GM12878 (cell line): ENCODE measurements at regions of chr10 and their contacts with region 1.

Region 1: GRCh38 chr10:131900350-131901146 is at the start of gene PPP2R2D:
- DNase-seq: peak; percentile 65
- ATAC-seq: peak; percentile 95
- H3K4me3 ChIP-seq: peak within 1 kb of the TSS; percentile 91
- H3K27ac ChIP-seq: peak within 1 kb of the TSS; percentile 73
- H3K4me1 ChIP-seq: peaks cover 22% of the 10 kb centered on the region
- H3K27me3 ChIP-seq: no peaks in the 10 kb centered on the region; a peak in 1 of 4 replicates
- CTCF ChIP-seq: no peak
- EP300 ChIP-seq: no peak
- POLR2A ChIP-seq: peak; percentile 11; the same call in 1 of the 2 replicates
- RAD21 ChIP-seq: no peak
- polyA plus RNA-seq, gene PPP2R2D: 2.8 to 3.6 TPM

Region 2: GRCh38 chr10:131885391-131886161 is 15.0 kb before region 1 on chr10:
- CTCF ChIA-PET with region 1: interaction called, 12 read pairs
- POLR2A ChIA-PET with region 1: no interaction called
- RAD21 ChIA-PET with region 1: no interaction called
- SMC1A ChIA-PET with region 1: interaction called, 3 read pairs
- in situ Hi-C with region 1: no loop called
- intact Hi-C with region 1: no loop called
- DNase-seq: no peak
- ATAC-seq: peak; percentile 100
- H3K4me3 ChIP-seq: no peak overlapping the region
- H3K27ac ChIP-seq: no peak overlapping the region
- H3K4me1 ChIP-seq: no peaks in the 10 kb centered on the region
- H3K27me3 ChIP-seq: no peaks in the 10 kb centered on the region
- CTCF ChIP-seq: peak; percentile 94 to 97 (median 94)
- EP300 ChIP-seq: no peak
- POLR2A ChIP-seq: no peak
- RAD21 ChIP-seq: peak; percentile 94

Region 3: DNA sequence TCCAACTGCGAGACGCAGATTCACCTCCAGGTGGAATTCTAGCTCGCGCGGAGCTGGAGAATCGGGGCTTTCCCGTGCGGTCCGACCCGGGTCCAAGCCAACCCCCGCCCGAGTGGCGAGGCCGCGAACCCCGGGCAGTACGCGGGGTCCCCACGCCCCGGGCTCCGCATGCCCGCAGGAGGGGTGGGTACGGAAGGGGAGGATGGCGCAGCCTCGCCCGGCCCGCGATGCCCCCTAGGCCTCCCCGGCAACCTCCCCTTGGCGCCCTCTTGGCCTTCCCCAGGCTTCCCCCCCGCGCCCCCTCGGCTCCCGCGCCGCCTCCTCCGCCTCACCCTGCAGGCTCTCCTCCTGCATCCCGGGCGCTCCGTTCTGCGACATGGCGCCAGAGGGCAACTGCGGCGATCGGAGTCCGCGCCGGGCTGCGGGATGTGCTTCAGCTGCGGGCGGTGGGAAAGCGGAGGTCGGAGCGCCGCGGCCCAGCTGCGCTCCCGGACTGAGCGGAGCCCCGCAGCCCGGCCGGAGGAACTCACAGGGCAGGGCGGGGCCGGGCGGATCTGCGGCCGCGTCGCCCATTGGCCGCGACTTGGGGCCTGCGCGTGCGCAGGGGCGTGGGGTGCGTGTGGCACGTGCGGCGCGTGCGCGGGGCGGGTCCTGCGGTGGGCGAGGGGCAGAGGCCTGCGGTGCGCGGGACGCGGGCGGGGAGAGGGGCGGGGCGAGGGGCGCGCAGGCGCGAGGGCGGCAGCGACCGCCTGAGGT is 81.1 kb after region 1 on chr10 and contains the start of gene BNIP3:
- CTCF ChIA-PET with region 1: interaction called, 3 read pairs
- POLR2A ChIA-PET with region 1: interaction called, 3 read pairs
- RAD21 ChIA-PET with region 1: no interaction called
- SMC1A ChIA-PET with region 1: interaction called, 4 read pairs
- in situ Hi-C with region 1: loop called (anchors 5 kb)
- intact Hi-C with region 1: loop called (anchors 2 kb)
- DNase-seq: peak; percentile 75
- ATAC-seq: peak; percentile 97
- H3K4me3 ChIP-seq: peak within 1 kb of the TSS; percentile 98
- H3K27ac ChIP-seq: peak within 1 kb of the TSS; percentile 55
- H3K4me1 ChIP-seq: no peaks in the 10 kb centered on the region; the same call in 1 of the 2 replicates
- H3K27me3 ChIP-seq: no peaks in the 10 kb centered on the region
- CTCF ChIP-seq: no peak
- EP300 ChIP-seq: no peak
- POLR2A ChIP-seq: peak; percentile 79
- RAD21 ChIP-seq: no peak
- polyA plus RNA-seq, gene BNIP3: 7.7 to 14.0 TPM

Region 4: DNA sequence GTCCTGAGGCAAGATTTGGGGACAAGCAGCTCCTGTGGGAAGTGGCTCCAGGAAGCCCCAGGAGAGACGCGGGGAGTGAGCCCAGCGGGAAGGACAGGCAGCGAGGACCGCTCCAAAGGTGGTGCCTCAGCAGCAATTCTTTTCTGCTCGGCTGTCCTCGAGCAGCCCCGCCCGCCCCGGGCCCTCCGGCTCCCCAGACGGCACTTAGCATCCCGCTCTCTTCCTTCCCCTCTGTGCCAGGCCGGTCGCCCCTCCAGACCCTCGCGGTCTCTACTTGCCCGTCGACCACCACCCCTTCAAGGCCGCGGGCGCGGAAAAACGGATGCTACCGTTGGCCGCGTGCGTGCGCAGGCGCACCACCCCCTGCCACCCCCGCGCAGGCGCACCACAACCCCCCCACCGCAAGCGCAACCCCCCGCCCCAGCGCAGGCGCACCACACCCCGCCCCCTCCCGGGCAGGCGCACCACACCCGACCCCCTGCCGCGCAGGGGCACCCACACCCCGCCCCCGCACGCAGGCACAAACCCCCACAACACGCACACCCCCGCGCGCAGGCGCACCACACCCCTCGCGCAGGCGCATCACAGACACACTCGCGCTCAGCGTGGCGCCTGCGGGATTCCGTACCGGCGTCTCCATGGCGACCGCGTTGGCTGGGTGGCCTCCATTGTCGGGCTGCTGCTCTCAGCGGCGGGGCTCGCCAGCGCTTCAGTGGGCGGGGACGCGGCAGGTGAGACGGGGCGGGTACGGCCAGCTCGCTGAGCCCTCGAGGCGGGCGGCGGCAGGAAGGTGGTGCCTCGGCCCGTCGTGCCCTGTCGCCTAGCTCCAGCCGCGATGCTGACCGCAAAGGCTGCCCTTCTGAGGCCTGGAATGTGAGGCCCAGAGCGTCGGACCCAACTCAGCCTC is 431.2 kb after region 1 on chr10 and contains the start of gene LRRC27:
- CTCF ChIA-PET with region 1: no interaction called
- POLR2A ChIA-PET with region 1: no interaction called
- RAD21 ChIA-PET with region 1: no interaction called
- SMC1A ChIA-PET with region 1: no interaction called
- in situ Hi-C with region 1: loop called (anchors 10 kb)
- intact Hi-C with region 1: loop called (anchors 5 kb)
- DNase-seq: peak; percentile 94
- ATAC-seq: peak; percentile 89
- H3K4me3 ChIP-seq: peak within 1 kb of the TSS; percentile 100
- H3K27ac ChIP-seq: peak within 1 kb of the TSS; percentile 91
- H3K4me1 ChIP-seq: peaks cover 12% of the 10 kb centered on the region
- H3K27me3 ChIP-seq: no peaks in the 10 kb centered on the region
- CTCF ChIP-seq: no peak
- EP300 ChIP-seq: no peak
- POLR2A ChIP-seq: peak; percentile 94
- RAD21 ChIP-seq: no peak
- polyA plus RNA-seq, gene LRRC27: 0.48 to 0.80 TPM

Region 5: DNA sequence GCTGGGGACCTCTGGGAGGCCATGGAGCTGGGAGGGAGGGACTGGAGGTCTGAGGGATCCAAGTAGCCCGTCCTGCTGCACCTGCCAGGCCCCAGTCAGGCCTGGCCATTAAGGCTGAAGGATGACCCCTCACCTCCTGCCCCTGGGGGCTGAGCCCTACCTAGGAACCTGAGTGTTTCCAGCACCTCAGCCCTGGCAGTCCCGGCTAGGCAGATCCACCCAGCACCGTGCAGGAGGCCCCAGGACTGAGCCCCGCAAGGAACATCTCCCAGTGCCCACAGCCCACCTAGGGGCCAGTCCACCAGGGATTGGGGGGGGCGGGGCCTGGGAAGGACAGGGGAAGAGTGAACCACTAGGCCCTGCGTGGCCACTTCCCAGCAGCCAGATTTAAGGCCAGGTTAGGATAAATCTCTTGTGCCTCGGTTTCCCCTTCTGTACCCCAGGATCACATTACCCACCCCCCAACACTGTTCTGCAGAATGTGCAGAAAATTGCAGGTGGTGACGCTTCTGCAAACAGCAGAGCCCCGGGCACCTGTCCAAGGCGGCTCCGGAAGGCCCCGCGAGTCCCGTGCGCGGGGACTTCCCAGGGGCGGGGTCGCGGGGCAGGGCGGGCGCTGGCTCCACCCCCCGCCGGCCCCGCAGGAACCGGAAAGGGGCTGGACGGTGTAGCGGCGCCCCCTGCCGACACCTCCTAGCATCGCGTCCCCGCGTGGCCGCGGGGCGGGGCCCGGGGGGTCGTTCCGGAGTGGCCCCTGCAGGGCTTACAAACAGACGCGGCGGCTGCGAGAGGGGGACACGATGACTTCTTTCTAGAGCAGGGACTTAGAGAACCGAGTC is 552.3 kb after region 1 on chr10:
- CTCF ChIA-PET with region 1: no interaction called
- POLR2A ChIA-PET with region 1: no interaction called
- RAD21 ChIA-PET with region 1: no interaction called
- SMC1A ChIA-PET with region 1: no interaction called
- in situ Hi-C with region 1: loop called (anchors 10 kb)
- intact Hi-C with region 1: no loop called
- DNase-seq: no peak
- ATAC-seq: peak; percentile 94
- H3K4me3 ChIP-seq: no peak overlapping the region
- H3K27ac ChIP-seq: peak overlapping the region; percentile 3; the same call in 1 of the 2 replicates
- H3K4me1 ChIP-seq: peaks cover 12% of the 10 kb centered on the region
- H3K27me3 ChIP-seq: no peaks in the 10 kb centered on the region
- CTCF ChIP-seq: peak; percentile 81 to 97 (median 88)
- EP300 ChIP-seq: no peak
- POLR2A ChIP-seq: no peak
- RAD21 ChIP-seq: peak; percentile 85